Calu3 (cell line): ENCODE measurements at regions of chr10 and their contacts with region 1.

Region 1: GRCh38 chr10:17206210-17206709 is 4.8 kb upstream of the TRDMT1 start:
- DNase-seq: no peak
- H3K4me3 Mint-ChIP-seq: no peak overlapping the region
- H3K27ac Mint-ChIP-seq: no peak overlapping the region
- H3K4me1 Mint-ChIP-seq: peaks cover 56% of the 10 kb centered on the region
- H3K27me3 Mint-ChIP-seq: no peaks in the 10 kb centered on the region
- CTCF ChIP-seq: no peak

Region 2: DNA sequence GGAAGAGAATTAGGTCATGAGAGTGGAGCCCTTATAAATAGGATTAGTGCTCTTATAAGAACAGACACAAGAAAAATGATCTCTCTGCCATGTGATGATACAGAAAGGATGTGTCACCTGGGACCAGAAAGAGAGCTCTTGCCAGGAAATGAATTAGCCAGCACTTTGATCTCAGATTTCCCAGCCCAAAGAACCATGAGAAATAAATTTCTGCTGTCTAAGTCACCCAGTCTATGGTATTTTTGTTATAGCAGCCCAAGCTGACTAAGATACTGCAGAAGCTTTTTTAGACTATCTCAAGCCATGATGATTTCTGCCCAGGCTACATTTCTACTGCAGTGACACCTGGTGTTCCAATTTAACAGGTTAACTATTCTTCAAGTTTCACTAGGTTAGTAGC is 473.9 kb before region 1 on chr10:
- CTCF ChIA-PET with region 1: interaction called, 13 read pairs
- intact Hi-C with region 1: no loop called
- DNase-seq: no peak
- H3K4me3 Mint-ChIP-seq: no peak overlapping the region
- H3K27ac Mint-ChIP-seq: no peak overlapping the region
- H3K4me1 Mint-ChIP-seq: no peaks in the 10 kb centered on the region
- H3K27me3 Mint-ChIP-seq: no peaks in the 10 kb centered on the region
- CTCF ChIP-seq: no peak

Region 3: GRCh38 chr10:17161775-17162174 is 44.5 kb before region 1 on chr10:
- CTCF ChIA-PET with region 1: no interaction called
- intact Hi-C with region 1: no loop called
- DNase-seq: no peak
- H3K4me3 Mint-ChIP-seq: no peak overlapping the region
- H3K27ac Mint-ChIP-seq: no peak overlapping the region
- H3K4me1 Mint-ChIP-seq: no peaks in the 10 kb centered on the region
- H3K27me3 Mint-ChIP-seq: no peaks in the 10 kb centered on the region
- CTCF ChIP-seq: no peak

Region 4: DNA sequence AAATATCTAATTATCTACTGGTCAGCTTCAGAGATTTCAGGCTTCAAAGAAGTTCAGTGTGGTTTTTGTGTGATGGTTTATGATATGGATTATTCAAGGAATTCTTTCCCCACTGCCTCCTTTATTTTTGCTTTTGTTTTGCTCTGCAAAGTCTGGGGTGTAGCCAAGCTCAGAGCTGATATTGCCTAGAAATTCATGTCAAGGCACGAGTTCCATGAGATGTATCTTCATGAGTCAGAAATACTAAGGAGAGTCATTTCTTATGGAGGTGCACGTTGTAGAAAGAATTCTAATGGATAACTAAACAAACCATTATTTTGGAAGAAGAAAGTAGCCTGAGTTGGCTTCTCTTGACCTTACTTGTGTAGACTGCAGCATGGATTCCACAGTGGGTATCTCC is 59.2 kb after region 1 on chr10:
- CTCF ChIA-PET with region 1: no interaction called
- intact Hi-C with region 1: no loop called
- DNase-seq: no peak
- H3K4me3 Mint-ChIP-seq: no peak overlapping the region
- H3K27ac Mint-ChIP-seq: no peak overlapping the region
- H3K4me1 Mint-ChIP-seq: no peaks in the 10 kb centered on the region
- H3K27me3 Mint-ChIP-seq: peaks cover 32% of the 10 kb centered on the region
- CTCF ChIP-seq: no peak

Region 5: GRCh38 chr10:17348501-17349349 is 142.5 kb after region 1 on chr10:
- CTCF ChIA-PET with region 1: no interaction called
- intact Hi-C with region 1: no loop called
- DNase-seq: peak; percentile 36
- H3K4me3 Mint-ChIP-seq: peak overlapping the region; percentile 63
- H3K27ac Mint-ChIP-seq: peak overlapping the region; percentile 91
- H3K4me1 Mint-ChIP-seq: peaks cover 36% of the 10 kb centered on the region
- H3K27me3 Mint-ChIP-seq: no peaks in the 10 kb centered on the region
- CTCF ChIP-seq: no peak